Right ventricle myocardium inferior (tissue), 1 donor: ENCODE measurements at regions of chr17 and their contacts with region 1.

Region 1: GRCh38 chr17:46002311-46002972 is 3.4 kb downstream of the STH start:
- DNase-seq: peak; percentile 85
- ATAC-seq: peak; percentile 81

Region 2: DNA sequence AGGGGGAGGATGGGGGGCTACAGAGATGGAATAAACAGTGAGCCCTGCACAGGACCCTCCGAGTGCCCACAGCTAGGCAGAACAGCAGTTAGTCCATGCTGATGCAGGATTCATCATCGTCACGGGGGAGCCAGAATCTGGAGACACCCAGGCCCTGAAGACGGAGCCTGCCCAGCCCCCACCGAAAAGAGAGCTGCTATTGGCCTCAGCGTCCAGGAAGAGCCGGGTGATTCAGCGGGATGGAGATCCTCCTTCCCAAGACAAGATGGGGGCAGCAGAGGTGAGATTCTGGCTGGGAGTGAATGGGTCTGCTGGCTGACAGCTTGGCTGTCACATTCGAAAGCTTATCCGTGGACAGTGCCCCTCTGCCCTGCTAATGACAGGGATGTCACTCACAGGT is 351.9 kb before region 1 on chr17:
- intact Hi-C with region 1: no loop called
- DNase-seq: no peak
- ATAC-seq: no peak

Region 3: DNA sequence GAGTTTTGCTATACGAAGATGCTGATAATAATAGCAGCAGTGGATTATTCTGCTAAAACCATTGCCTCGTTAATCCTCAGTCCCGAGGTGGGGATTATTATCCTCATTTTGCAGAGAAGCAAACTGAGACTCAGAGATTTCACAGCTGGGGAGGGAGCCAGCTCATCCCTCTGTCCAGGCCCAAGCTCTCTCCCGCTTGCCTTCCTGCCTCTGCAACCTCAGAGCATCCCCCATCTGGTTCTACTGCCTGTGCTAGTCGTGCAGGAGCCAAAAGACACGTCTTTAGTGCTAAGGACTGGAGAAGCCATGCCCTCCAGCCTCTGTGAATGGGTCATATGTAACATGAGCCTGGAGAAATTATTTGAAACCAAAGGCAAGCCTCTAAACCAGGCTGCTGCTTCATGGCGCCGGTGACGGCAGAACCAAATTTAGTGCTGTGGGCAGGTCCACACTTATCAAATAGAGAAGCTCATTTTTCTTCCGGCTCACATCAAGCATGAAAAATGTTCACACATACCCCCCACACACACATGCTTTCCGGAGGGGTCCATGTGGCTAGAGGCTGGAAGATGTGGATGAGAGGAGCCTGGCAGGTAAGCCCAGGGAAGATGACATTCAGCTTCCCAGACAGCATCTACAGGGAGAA is 94.6 kb before region 1 on chr17:
- intact Hi-C with region 1: no loop called
- DNase-seq: no peak
- ATAC-seq: no peak

Region 4: GRCh38 chr17:45965812-45966211 is 36.6 kb before region 1 on chr17:
- intact Hi-C with region 1: no loop called
- DNase-seq: no peak
- ATAC-seq: no peak

Region 5: DNA sequence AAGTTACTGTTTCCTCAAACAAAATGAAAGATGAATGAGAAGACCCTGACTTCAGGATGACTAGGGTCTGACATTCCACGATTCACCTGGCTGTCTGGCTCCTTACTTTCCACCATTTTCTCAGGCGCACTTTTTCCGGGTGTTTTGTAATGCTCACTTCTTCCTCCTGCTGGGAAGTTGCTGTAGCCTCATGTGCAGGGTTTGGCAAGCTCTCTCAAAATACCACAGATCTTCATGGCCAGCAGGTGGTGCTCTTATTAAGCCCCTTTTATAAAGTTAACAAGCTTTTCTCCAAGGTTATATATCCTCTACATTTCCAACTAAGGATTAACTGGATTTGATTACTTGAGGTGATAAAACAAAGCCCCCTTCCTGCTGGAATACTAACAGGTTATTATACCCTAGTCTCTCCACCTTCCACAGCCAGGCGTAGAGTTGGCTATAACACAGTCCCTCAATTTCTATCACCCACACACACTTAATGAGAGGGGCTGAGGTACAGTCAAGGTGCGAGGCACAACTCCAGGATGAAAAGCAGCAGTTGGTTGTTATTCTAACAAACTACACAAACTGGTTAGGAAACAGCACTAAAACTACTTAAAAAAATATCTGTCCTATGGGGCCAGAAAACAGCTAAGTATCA is 42.0 kb after region 1 on chr17:
- intact Hi-C with region 1: loop called (anchors 5 kb)
- DNase-seq: no peak
- ATAC-seq: peak; percentile 77

Region 6: DNA sequence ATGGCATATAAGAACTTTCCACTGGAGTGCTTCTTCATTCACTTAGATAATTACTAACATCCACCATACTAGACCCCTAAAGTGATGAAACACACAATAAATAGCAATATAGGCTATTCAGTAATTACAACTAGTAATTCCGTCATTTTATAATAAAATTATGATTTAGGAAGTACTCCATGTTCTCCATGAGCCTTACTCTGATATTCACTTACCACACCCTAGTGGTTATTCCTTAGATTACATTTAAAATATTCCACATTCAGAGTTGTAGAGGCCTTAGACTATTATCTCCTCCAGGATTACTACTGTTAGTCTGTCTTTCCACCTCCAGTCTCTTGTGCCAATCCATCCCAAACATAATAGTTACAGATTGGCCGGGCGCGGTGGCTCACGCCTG is 59.0 kb after region 1 on chr17:
- intact Hi-C with region 1: no loop called
- DNase-seq: no peak
- ATAC-seq: no peak